ENCODE measurements at regions of chr17 and their contacts with region 1.

Region 1: DNA sequence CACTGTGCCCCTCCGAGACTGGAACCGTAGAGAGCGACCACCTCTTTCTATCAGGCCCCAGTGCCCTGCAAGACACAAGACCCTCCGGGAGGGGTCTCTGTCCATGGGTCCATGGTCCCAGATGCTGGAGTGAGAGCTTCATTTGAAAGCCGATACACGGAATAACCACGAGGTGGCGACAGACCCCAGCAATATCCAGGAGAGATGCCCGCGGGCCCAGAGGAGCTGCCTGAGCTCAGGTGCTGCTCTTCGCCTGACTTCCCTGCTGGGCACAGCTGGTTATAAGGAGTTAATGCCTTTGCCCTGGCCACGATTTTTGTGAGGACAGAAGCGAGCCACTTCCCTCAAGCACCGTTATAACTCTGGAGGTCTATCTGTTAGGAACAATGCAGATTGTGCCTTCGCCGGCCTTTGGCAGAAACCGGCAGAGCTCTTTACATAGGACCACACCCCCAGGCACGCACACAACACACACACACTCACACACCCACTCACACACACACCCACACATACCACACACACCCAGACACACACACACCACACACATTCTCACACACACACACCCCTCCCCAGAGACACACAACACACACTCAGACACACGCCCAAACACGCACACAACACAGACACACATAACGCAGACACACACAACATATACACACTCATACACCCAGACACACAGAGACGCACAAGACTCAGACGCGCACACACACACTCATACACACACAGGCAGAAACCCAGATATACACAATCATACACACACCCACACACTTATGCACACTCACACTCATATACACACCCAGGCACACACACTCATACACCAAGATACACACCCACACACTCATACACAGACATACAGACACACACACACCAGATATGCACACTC is 436.4 kb downstream of the SOX9 start:
- DNase-seq: no peak
- ATAC-seq: peak; percentile 63
- H3K4me3 ChIP-seq: no peak overlapping the region
- H3K27ac ChIP-seq: peak overlapping the region; percentile 65
- H3K4me1 ChIP-seq: peaks cover 64% of the 10 kb centered on the region
- H3K27me3 ChIP-seq: no peaks in the 10 kb centered on the region
- CTCF ChIP-seq: peak; percentile 97

Region 2: DNA sequence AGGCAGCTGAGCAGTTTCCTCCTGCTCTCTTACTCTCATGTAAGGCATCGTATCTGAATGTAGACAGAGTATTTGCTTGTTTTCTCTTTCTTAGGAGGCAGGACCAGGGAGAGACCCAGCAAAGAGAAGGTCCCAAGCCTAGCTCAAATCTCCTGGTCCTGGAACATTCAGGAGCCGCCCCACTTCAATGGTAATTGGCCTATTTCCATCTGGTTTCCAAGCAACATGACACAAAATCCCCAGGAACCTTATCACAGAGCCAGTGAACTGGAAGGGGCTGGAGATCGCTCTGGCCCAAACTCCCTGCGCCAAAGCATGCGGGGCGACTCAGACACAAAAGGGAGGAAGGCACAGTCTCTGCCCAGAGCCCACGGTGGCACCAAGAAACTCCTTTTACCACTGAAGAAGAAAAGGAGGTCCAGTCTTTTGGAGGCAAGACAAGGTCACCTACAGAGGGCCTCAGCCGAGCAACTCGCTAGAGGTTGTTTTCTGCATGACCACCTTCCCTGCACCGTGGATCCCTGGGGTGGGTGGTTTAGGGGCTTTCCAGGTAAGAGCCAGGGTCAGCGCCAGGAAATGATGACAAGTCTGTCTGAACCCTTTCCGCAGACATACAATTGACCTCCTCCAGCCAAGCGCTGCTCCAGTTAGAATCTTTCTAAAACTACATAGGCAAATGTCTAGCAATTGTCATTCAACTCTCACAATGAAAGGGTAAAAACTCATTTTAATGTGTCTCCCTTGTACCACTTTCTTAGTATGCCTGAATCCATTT is 41.7 kb before region 1 on chr17:
- CTCF ChIA-PET with region 1: no interaction called
- POLR2A ChIA-PET with region 1: no interaction called
- in situ Hi-C with region 1: no loop called
- intact Hi-C with region 1: no loop called
- DNase-seq: no peak
- ATAC-seq: peak; percentile 3; the same call in 1 of the 2 replicates
- H3K4me3 ChIP-seq: peak overlapping the region; percentile 1 to 53; a peak in 3 of 4 replicates
- H3K27ac ChIP-seq: peak overlapping the region; percentile 90
- H3K4me1 ChIP-seq: peaks cover 91% of the 10 kb centered on the region
- H3K27me3 ChIP-seq: no peaks in the 10 kb centered on the region
- CTCF ChIP-seq: no peak

Region 3: GRCh38 chr17:72592242-72592966 is 35.2 kb after region 1 on chr17:
- CTCF ChIA-PET with region 1: interaction called, 14 read pairs
- POLR2A ChIA-PET with region 1: no interaction called
- in situ Hi-C with region 1: no loop called
- intact Hi-C with region 1: loop called (anchors 2 kb)
- DNase-seq: no peak
- ATAC-seq: peak; percentile 83
- H3K4me3 ChIP-seq: peak overlapping the region; percentile 89 to 94
- H3K27ac ChIP-seq: peak overlapping the region; percentile 96
- H3K4me1 ChIP-seq: peaks cover 26% of the 10 kb centered on the region
- H3K27me3 ChIP-seq: no peaks in the 10 kb centered on the region
- CTCF ChIP-seq: no peak

Region 4: DNA sequence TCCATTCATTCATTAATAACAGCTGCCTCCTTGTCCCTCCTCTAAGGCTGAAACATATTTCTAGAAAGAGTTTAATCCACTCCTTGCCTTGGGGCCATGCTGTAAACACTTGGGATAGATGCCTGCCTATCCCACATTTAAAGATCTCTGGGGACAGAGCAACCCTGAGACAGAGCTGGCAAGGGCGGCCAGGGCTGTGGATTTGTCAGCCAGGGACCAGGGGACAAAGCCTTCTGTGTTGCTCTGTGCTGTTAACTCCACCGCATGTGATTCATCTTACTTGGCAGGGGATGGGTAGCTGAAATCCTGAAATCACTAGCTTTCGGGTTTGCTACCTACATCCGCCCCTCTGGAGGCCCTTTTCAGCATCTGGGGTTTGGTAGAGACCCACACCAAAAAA is 142.4 kb after region 1 on chr17:
- CTCF ChIA-PET with region 1: interaction called, 11 read pairs
- POLR2A ChIA-PET with region 1: no interaction called
- in situ Hi-C with region 1: no loop called
- intact Hi-C with region 1: no loop called
- DNase-seq: no peak
- ATAC-seq: peak; percentile 79
- H3K4me3 ChIP-seq: no peak overlapping the region
- H3K27ac ChIP-seq: peak overlapping the region; percentile 96
- H3K4me1 ChIP-seq: peaks cover 62% of the 10 kb centered on the region
- H3K27me3 ChIP-seq: no peaks in the 10 kb centered on the region
- CTCF ChIP-seq: no peak

Region 5: GRCh38 chr17:72795946-72796345 is 238.8 kb after region 1 on chr17:
- CTCF ChIA-PET with region 1: no interaction called
- POLR2A ChIA-PET with region 1: no interaction called
- in situ Hi-C with region 1: no loop called
- intact Hi-C with region 1: no loop called
- DNase-seq: no peak
- ATAC-seq: no peak
- H3K4me3 ChIP-seq: no peak overlapping the region
- H3K27ac ChIP-seq: no peak overlapping the region
- H3K4me1 ChIP-seq: no peaks in the 10 kb centered on the region
- H3K27me3 ChIP-seq: no peaks in the 10 kb centered on the region
- CTCF ChIP-seq: no peak

Region 6: DNA sequence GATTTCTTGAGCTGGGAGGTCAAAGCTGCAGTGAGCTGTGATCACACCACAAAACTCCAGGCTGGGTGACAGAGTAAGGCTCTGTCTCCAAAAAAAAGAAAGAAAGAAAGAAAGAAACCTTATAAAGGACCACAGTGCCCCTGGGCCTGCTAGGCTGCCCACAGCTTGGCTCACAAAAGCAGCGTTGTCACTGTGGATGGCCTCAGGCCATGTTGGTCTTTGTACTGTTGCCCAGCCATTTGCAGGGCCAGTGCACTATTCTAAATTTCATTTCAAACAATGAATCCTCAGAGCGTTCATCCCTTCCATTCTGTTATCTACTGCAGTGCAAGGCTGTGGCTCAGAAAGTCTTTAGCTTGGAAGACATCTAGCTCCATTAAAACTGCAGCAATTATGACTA is 326.9 kb after region 1 on chr17:
- CTCF ChIA-PET with region 1: interaction called, 11 read pairs
- POLR2A ChIA-PET with region 1: no interaction called
- in situ Hi-C with region 1: no loop called
- intact Hi-C with region 1: no loop called
- DNase-seq: no peak
- ATAC-seq: no peak
- H3K4me3 ChIP-seq: no peak overlapping the region
- H3K27ac ChIP-seq: no peak overlapping the region
- H3K4me1 ChIP-seq: no peaks in the 10 kb centered on the region
- H3K27me3 ChIP-seq: no peaks in the 10 kb centered on the region
- CTCF ChIP-seq: no peak

Region 7: GRCh38 chr17:73223626-73224230 is 666.5 kb after region 1 on chr17:
- CTCF ChIA-PET with region 1: interaction called, 14 read pairs
- POLR2A ChIA-PET with region 1: no interaction called
- in situ Hi-C with region 1: no loop called
- intact Hi-C with region 1: no loop called
- DNase-seq: no peak
- ATAC-seq: no peak
- H3K4me3 ChIP-seq: no peak overlapping the region
- H3K27ac ChIP-seq: no peak overlapping the region
- H3K4me1 ChIP-seq: peaks cover 25% of the 10 kb centered on the region
- H3K27me3 ChIP-seq: no peaks in the 10 kb centered on the region
- CTCF ChIP-seq: no peak